ENCODE measurements at regions of chr3 and their contacts with region 1.

Region 1: DNA sequence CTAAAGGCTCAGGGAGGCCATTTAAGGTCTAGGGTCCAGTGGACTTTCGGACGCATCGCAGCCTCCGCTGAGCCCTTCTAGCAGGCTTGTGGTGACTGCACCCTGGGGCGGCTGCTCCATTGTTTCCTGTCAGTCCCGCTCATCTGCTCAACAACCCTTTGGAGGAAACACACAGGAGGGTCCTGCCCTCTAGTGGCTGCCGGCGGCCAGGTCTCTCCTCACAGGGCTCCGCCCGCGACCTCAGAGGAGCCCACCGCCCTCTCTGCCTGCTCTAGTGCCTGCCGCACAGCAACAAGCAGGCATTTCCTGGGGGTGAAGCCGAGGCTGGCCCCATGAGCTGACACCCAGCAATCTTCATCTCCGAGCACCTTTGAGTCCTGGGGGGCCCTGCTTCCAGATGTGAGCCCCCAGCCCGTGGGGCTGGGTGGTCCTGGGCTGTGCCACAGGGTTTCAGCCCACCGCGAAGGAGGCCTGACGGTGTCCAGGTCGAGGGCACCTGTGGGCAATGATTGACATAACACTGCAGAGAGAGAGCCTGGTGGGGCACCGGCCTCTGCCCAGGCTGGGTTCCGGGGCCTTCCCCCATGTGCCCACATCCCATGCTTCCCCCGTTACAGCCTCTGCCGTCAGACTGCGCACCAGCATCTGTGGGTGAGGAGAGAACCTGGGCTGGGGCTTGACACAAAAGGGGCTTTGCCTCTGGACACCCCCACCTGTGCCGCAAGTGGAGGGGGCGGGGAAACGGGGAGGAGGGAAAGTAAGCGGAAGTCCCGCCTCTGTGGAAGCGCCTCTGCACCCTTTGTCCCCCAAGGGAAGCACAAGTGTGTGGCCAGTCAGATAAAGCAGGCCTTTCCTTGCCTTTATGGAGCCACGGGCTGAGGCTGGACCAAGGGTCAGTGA is 27.0 kb upstream of the SFMBT1 start:
- DNase-seq: peak; percentile 79 to 93 (median 85)
- H3K4me3 ChIP-seq: peak overlapping the region; percentile 23 to 84 (median 43)
- H3K27ac ChIP-seq: peak overlapping the region in 2 of 5 donors; percentile 22 to 30
- H3K4me1 ChIP-seq: peaks cover 0 to 6% of the 10 kb centered on the region in 2 donors
- H3K27me3 ChIP-seq: no peaks in the 10 kb centered on the region
- CTCF ChIP-seq: peak; percentile 88 to 96 (median 92)
- POLR2A ChIP-seq: no peak

Region 2: DNA sequence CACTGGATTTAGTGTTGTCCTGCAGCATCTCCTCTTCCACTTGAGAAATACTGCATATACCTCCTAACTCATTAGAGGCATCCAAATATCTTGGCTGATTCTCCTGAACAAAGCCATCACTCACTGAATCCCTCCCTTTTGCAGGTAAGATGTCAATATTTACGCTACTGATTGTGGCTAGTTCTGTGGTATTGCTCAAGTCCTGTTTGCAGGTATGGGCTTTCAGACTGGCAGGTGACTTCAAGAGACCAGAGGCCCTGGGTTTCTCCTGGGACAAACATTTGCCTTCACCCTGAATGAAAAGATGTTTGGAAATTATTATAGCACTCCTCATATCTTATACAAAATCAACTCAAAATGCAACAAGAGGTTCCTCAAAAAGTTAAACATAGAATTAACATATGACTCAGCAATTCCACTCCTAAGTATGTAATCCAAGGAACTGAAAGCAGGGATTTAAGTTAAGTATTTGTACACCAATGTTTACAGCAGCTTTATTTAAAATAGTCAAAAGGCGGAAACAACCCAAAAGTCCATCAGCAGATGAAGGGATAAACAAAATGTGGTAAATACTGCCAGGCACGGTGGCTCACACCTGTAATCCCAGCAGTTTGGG is 320.8 kb before region 1 on chr3:
- intact Hi-C with region 1: loop called in 1 of 2 experiments (anchors 10 kb)
- DNase-seq: no peak
- H3K4me3 ChIP-seq: no peak overlapping the region
- H3K27ac ChIP-seq: no peak overlapping the region
- H3K4me1 ChIP-seq: peaks cover 0 to 4% of the 10 kb centered on the region in 2 donors
- H3K27me3 ChIP-seq: no peaks in the 10 kb centered on the region
- CTCF ChIP-seq: no peak
- POLR2A ChIP-seq: no peak

Region 3: GRCh38 chr3:52809662-52810377 is 263.1 kb before region 1 on chr3:
- intact Hi-C with region 1: no loop called
- DNase-seq: no peak
- H3K4me3 ChIP-seq: no peak overlapping the region
- H3K27ac ChIP-seq: no peak overlapping the region
- H3K4me1 ChIP-seq: no peaks in the 10 kb centered on the region
- H3K27me3 ChIP-seq: no peaks in the 10 kb centered on the region
- CTCF ChIP-seq: no peak
- POLR2A ChIP-seq: no peak

Region 4: DNA sequence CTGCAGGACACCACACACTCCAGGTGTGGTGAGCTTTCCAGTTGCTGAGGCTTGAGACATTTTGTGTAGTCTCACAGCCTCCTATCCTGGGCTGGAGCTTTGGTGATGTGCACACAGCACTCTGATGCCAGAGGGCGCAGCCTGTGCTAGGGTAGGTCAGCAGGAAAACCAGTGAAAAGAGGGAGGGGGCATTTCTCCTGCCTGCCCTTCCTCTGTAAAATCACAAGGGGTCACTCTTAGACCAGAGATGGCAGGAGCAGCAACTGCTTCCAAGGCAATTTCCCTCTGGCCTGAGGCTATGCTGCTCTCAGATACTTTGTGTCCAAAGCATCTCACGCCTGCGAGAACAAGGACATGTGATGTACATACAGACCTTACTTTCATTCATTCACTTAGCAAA is 221.6 kb before region 1 on chr3:
- intact Hi-C with region 1: loop called (anchors 5 kb)
- DNase-seq: peak in 6 of 7 donors; percentile 57 to 76 (median 60)
- H3K4me3 ChIP-seq: no peak overlapping the region
- H3K27ac ChIP-seq: no peak overlapping the region
- H3K4me1 ChIP-seq: peaks cover 0 to 12% of the 10 kb centered on the region in 2 donors
- H3K27me3 ChIP-seq: no peaks in the 10 kb centered on the region
- CTCF ChIP-seq: peak; percentile 42 to 91 (median 82)
- POLR2A ChIP-seq: no peak

Region 5: DNA sequence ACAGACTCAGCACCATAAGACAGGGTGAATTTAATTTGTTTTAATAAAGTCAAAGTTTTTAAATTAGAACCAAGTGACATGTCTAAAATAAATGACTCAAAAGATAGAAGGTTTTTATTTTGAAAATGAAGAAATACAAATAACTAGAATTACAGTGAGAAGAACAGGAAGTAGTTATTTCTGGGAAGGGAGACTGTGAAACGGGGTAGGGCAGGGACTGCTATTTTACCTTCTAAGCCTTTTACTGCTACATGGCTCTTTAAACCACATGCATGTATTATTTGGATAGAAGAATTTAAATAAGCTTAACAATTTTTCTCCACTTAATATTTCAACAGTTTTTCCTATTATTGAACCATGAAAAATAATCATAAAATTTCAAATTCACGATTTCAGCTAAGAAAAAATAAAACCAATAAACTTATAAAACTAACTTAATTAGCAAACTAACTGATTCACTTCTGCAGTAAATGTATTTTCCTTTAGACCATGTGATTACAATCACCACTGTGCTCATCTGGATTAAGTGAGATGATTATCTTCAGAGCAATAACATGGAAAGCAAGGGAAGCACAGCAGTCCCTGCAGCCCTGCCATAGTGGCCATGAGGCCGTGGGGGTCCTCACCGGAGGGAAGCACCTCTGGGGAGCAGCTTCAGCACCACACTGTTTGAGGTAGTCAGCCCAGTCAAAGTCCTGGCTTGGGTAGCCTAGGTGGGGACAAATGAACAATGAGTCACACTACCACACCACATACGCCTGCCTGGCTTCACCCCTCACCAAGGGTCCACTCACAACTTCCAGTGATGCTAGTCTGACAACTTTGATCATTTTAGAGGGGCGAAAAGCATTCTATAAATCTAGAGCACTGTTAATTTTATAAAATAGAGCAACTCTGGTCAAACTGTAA is 147.2 kb before region 1 on chr3:
- intact Hi-C with region 1: loop called (anchors 10 kb)
- DNase-seq: no peak
- H3K4me3 ChIP-seq: no peak overlapping the region
- H3K27ac ChIP-seq: no peak overlapping the region
- H3K4me1 ChIP-seq: peaks cover 0 to 4% of the 10 kb centered on the region in 2 donors
- H3K27me3 ChIP-seq: no peaks in the 10 kb centered on the region
- CTCF ChIP-seq: no peak
- POLR2A ChIP-seq: no peak

Region 6: GRCh38 chr3:52934630-52935530 is 138.0 kb before region 1 on chr3:
- intact Hi-C with region 1: loop called in 1 of 2 experiments (anchors 10 kb)
- DNase-seq: peak; percentile 31 to 80 (median 60)
- H3K4me3 ChIP-seq: no peak overlapping the region
- H3K27ac ChIP-seq: no peak overlapping the region
- H3K4me1 ChIP-seq: peaks cover 0 to 7% of the 10 kb centered on the region in 2 donors
- H3K27me3 ChIP-seq: no peaks in the 10 kb centered on the region
- CTCF ChIP-seq: peak; percentile 65 to 80 (median 75)
- POLR2A ChIP-seq: no peak

Region 7: DNA sequence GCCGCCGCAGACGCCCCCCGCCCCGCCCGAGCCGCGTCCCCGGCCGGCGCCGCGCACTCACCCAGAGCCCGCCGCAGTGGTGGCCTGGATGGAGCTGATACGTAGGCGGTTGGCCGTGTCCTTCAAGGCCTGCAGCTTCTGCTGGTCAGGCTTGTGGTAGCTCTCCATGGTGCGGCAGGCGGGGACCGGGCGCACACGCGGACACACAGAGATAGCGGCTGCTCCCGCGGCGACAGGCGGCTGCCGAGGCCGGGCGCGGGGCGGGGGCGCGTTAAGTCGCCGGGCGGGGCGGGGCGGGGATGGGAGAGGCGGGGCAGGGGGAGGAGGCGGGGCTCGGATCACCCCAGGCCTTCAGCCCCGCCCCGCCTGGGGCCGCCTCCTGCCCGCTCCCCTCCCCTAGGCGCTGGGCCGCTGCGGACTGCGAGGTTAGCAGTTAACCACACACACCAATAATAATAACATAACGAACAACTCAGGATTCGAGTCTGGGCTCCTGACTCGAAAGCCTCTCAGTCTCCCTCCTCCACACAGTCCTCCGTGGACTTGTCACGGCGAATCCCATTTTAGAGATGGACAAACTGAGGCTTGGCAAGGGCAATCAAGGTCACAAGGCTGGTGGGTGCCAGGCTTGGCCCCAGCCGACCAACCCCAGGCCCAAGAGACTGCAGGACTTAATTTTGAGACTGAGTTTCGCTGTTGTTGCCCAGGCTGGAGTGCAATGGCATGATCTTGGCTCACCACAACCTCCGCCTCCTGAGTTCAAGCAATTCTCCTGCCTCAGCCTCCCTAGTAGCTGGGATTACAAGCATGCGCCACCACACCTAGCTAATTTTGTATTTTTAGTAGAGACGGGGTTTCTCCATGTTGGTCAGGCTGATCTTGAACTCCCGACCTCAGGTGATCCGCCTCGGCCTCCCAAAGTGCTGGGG is 183.1 kb after region 1 on chr3 and contains the start of gene TKT:
- intact Hi-C with region 1: no loop called
- DNase-seq: peak; percentile 85 to 92 (median 88)
- H3K4me3 ChIP-seq: peak within 1 kb of the TSS; percentile 19 to 100 (median 84)
- H3K27ac ChIP-seq: peak within 1 kb of the TSS; percentile 60 to 96 (median 81)
- H3K4me1 ChIP-seq: peaks cover 31 to 37% of the 10 kb centered on the region in 2 donors
- H3K27me3 ChIP-seq: no peaks in the 10 kb centered on the region
- CTCF ChIP-seq: no peak
- POLR2A ChIP-seq: peak; percentile 50 to 85
- total RNA-seq, gene TKT: 225 to 516 (median 326) TPM

Region 8: DNA sequence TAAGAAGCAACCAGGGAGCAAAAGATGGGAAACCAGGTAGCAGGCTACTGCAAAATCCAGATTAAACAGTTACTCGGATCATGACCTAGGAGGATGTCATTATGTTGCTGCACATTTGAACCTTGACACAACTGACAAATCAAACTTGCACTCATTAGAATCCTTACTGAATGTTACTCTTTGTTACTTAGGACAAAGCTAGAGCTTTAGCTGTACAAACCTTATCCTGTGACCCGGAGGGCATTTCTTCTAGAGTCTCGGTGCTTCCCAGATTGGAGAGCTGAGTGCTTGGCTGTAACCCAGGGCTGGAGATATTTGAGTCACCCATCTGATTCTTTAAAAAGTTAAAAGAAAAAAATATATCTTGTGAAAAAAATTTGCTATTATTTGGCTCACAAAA is 231.1 kb after region 1 on chr3:
- intact Hi-C with region 1: no loop called
- DNase-seq: peak; percentile 41 to 79 (median 70)
- H3K4me3 ChIP-seq: no peak overlapping the region
- H3K27ac ChIP-seq: peak overlapping the region in 4 of 5 donors; percentile 33 to 72 (median 66)
- H3K4me1 ChIP-seq: peaks cover 13 to 22% of the 10 kb centered on the region in 2 donors
- H3K27me3 ChIP-seq: no peaks in the 10 kb centered on the region
- CTCF ChIP-seq: no peak
- POLR2A ChIP-seq: no peak